ENCODE measurements at regions of chr1 and their contacts with region 1.

Region 1: DNA sequence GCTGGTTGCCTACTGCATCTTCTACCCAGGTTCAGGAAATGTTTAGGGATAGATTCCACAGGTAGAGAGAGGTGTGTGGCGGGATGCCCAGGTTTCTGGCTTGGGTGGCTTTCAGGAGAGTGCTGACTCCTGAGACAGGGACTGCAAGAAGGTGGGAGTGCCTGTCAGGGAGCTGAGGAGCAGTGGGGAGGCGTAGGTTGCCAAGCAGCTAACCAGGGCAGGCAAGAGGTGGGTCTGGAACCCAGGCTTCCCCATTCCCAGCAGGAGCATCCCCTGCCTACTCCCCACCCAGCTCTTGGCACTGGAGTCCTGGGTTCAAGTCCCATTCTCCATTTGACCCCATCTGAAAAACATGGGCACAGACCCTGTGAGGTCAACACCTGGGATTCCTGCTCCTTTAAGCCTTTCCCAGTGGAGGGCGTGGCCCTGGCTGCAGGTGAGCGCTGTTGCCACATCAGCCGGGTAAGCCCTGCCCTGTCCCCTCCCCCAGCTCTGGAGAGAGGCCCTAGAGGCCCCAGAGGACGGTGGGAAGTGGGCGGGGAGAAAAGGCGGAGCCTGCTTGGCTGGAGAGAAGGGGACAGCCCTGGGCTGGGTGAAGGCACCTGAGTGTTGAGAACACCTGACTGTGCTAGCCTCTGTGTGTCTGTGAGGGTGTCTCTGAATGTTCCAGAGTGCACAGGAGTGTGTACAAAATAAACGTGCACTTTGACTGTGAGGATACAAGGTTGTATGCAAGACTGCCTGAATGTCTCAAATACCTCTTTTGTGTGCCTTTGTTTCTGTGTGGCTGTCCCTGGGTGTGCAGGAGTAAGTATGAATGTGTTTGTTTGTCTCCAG is 14.0 kb upstream of the SYNC start:
- DNase-seq: no peak
- ATAC-seq: peak; percentile 67
- H3K4me3 ChIP-seq: no peak overlapping the region
- H3K27ac ChIP-seq: no peak overlapping the region; the same call in 1 of the 2 replicates
- H3K4me1 ChIP-seq: peaks cover 5% of the 10 kb centered on the region; the same call in 1 of the 2 replicates
- H3K27me3 ChIP-seq: no peaks in the 10 kb centered on the region
- CTCF ChIP-seq: no peak

Region 2: GRCh38 chr1:32754313-32755097 is 38.0 kb after region 1 on chr1:
- CTCF ChIA-PET with region 1: interaction called, 5 read pairs
- POLR2A ChIA-PET with region 1: no interaction called
- in situ Hi-C with region 1: no loop called
- intact Hi-C with region 1: loop called (anchors 5 kb)
- DNase-seq: no peak
- ATAC-seq: peak; percentile 48
- H3K4me3 ChIP-seq: peak overlapping the region; percentile 63 to 98
- H3K27ac ChIP-seq: peak overlapping the region; percentile 90
- H3K4me1 ChIP-seq: peaks cover 41% of the 10 kb centered on the region
- H3K27me3 ChIP-seq: no peaks in the 10 kb centered on the region
- CTCF ChIP-seq: no peak

Region 3: DNA sequence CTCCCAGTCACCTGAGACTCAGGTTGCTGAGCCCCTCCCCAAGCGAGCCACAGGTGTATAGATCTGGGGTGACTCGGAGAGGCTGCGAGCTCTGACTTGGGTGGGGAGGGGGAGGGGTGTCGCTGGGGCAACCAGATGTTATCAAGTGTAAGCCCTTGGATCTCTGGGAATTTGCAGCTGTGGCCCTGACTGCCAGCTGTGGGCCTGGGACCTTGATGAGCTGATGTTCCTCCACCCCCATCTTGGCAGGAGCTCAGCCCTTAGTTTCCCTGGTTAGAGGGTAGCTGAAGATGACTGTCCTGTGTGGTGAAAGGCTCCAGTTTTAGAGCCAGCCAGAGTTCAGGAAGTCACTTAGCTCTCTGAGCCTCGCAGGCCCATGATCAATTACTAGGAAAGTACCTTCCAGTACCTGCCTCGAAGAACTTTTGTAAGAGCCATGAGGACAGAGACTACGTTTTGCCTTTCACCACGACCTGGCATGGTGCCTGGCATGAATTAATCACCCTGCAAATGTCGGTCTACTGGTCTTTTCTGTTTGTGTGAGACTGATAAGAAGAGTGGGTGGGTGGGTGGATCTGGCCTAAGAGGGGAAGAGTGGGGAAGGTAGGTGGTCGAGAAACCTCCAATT is 44.8 kb after region 1 on chr1:
- CTCF ChIA-PET with region 1: interaction called, 5 read pairs
- POLR2A ChIA-PET with region 1: interaction called, 3 read pairs
- in situ Hi-C with region 1: loop called (anchors 10 kb)
- intact Hi-C with region 1: loop called (anchors 5 kb)
- DNase-seq: no peak
- ATAC-seq: peak; percentile 28
- H3K4me3 ChIP-seq: peak overlapping the region in 1 of 2 experiments; percentile 15; a peak in 2 of 4 replicates
- H3K27ac ChIP-seq: peak overlapping the region; percentile 99
- H3K4me1 ChIP-seq: peaks cover 94% of the 10 kb centered on the region
- H3K27me3 ChIP-seq: no peaks in the 10 kb centered on the region
- CTCF ChIP-seq: no peak